BJ (cell line): ENCODE measurements at regions of chr11 and their contacts with region 1.

Region 1: DNA sequence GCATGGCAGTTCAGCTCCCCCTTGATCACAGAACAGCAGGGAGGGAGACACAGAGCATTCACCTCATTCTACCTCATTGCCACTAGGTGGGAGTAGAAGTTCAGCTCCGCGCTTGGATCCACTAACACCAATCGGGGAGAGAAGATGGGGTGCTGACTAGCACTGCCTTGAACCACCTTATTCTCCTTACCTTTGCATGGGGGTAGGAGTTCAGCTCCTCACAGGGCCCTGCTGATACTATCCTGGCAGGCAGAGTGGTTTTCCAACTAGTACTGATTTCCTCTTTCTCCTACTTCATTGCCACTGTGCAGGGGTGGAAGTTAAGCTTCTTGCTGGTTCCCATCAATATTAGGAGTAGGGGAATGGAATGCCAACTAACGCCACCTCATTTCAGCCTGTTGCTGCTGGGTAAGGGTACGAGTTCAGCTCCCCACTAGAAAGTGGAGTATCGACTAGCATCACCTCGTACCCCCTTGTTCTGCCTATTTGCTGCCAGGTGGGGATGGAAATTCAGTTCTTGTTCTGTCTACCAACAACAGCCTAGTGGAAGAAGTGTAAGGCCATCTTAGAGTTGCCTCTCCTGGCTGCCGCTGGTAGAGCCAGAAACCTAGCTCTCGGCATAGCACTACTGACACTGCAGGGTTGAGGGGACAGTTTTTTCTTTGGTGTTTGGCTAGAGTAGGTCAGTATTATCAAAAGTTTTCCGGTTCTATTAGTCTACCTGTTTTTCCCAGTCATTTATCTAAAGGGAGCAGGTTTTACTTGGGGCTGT is 550.9 kb upstream of the CCDC90B start:
- DNase-seq: no peak
- H3K4me3 ChIP-seq: no peak overlapping the region
- H3K27me3 ChIP-seq: 0 out of 2 replicates have a peak, but pooled peaks cover 1% of the 10 kb centered on the region
- CTCF ChIP-seq: peak; percentile 77

Region 2: GRCh38 chr11:83778598-83778997 is 58.5 kb before region 1 on chr11:
- CTCF ChIA-PET with region 1: no interaction called
- POLR2A ChIA-PET with region 1: no interaction called
- DNase-seq: no peak
- H3K4me3 ChIP-seq: no peak overlapping the region
- H3K27me3 ChIP-seq: no peaks in the 10 kb centered on the region
- CTCF ChIP-seq: no peak

Region 3: GRCh38 chr11:84117394-84117793 is 280.3 kb after region 1 on chr11:
- CTCF ChIA-PET with region 1: no interaction called
- POLR2A ChIA-PET with region 1: no interaction called
- DNase-seq: no peak
- H3K4me3 ChIP-seq: no peak overlapping the region
- H3K27me3 ChIP-seq: no peaks in the 10 kb centered on the region
- CTCF ChIP-seq: no peak

Region 4: DNA sequence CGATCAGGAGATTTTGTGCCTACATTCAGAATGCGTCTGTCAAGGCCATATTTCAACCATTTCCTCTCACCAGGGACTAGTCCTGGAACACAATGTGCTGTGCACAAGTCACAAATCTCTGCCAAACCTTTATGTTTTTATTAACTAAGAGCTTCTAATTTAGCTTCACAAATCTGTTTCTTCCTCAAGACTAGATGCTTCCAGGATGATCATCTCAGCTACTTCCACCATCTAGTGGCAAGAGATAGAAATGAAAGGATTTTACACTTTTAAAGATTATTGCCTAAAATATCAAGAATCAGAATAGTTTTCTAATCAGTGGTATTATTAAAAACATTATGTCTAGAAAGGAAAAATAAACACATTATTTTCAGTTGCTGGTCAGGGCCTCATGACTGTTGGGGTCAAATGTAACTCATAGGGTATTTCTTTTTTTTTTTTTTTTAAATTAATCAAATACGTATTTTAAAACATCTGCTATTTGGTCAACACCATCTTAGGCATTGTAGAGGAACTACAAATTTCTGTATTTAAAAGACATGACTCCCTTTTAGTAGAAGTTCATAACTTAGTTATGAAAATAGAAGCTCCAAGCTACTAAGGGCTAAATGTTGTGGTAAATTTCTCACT is 687.5 kb after region 1 on chr11:
- CTCF ChIA-PET with region 1: interaction called, 19 read pairs
- POLR2A ChIA-PET with region 1: no interaction called
- DNase-seq: no peak
- H3K4me3 ChIP-seq: no peak overlapping the region
- H3K27me3 ChIP-seq: no peaks in the 10 kb centered on the region
- CTCF ChIP-seq: peak; percentile 40

Region 5: DNA sequence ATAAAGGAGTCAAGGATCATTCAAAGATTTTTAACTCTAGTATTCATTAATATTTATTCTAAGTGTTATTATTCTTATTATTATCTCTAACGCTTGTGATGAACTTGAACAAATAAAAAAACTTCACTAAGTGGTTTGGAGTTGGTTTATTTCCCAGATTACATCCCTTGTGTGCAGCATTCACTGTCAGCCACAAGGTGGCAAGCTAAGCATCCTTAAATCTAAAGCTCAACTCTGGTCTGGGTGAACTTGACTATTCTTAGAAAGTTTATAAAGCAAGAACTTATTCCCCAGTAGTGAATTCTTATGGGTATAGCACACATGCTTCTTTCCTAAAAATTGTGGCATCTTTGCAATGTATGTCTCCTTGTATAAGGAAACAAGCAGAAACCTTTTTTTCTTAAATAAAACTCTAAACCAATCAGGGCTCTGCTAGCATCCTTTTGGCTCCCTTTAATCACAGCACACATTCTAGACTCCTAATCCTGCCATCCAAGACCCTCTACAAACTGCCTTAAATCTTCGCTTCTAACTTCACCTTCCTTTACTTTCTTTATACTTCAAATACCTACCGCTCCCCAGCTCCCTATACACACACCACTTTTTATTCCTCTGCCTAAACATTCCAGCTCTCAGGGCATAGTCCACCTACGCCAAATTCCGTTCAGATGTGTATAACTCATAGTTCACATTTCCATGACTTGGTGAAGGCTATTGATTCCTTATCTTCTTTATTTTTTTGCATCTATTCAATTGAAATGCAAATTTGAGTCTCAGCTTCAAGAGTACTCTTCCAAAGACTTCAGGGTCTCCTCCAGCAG is 721.2 kb after region 1 on chr11:
- CTCF ChIA-PET with region 1: interaction called, 24 read pairs
- POLR2A ChIA-PET with region 1: no interaction called
- DNase-seq: peak; percentile 2
- H3K4me3 ChIP-seq: no peak overlapping the region
- H3K27me3 ChIP-seq: no peaks in the 10 kb centered on the region
- CTCF ChIP-seq: peak; percentile 83

Region 6: GRCh38 chr11:84564180-84564866 is 727.3 kb after region 1 on chr11:
- CTCF ChIA-PET with region 1: interaction called, 24 read pairs
- POLR2A ChIA-PET with region 1: no interaction called
- DNase-seq: peak; percentile 4
- H3K4me3 ChIP-seq: no peak overlapping the region
- H3K27me3 ChIP-seq: no peaks in the 10 kb centered on the region
- CTCF ChIP-seq: peak; percentile 83